ENCODE measurements at regions of chr4 and their contacts with region 1.

Region 1: GRCh38 chr4:1746265-1746691 is 25.0 kb downstream of the TACC3 start:
- DNase-seq: peak; percentile 52 to 85 (median 60)
- ATAC-seq: peak; percentile 68
- H3K4me3 ChIP-seq: no peak overlapping the region
- H3K4me3 Mint-ChIP-seq: no peak overlapping the region
- H3K27ac ChIP-seq: no peak overlapping the region
- H3K27ac Mint-ChIP-seq: no peak overlapping the region
- H3K4me1 ChIP-seq: no peaks in the 10 kb centered on the region
- H3K4me1 Mint-ChIP-seq: no peaks in the 10 kb centered on the region
- H3K27me3 ChIP-seq: no peaks in the 10 kb centered on the region
- H3K27me3 Mint-ChIP-seq: no peaks in the 10 kb centered on the region

Region 2: DNA sequence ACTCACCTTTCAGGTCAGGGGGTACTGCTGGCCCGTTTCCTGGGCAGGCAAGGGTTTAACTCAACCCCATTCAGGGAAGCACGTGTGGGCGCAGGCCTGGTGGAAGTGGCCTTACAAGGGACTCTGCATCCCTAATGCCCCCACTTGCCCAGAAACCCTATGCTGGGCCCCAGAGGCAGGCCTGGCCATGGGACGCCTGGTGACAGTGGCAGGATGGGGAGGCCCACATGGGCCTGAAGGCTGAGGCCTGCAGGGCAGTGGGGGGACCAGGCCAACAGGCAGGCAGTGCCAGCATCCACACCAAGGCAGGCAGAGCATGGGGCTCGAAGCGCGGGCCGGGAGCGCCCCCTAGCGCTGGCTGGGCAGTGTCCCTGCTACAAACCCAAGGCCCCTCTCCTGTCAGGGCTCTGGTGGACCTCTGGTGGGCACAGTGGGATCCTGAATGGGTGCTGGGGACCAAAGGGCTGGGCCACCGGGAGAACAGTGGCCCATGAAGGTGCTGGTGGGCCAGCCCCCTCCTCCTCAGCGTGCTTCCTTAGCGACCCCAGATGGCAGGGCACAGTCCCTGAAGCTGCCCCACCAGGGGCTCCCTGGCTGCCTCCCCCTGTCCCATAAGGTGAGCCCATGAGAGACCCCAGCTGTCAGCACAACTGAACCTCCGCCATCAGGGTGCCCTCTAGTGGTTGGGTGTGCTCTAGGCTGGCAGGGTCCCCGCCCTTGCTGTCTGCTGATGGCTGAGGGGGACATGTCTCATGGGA is 63.7 kb after region 1 on chr4:
- CTCF ChIA-PET with region 1: interaction called, 5 read pairs
- POLR2A ChIA-PET with region 1: no interaction called
- intact Hi-C with region 1: loop called in 1 of 2 experiments (anchors 1 kb)
- DNase-seq: peak; percentile 30 to 79 (median 61)
- ATAC-seq: peak; percentile 74
- H3K4me3 ChIP-seq: no peak overlapping the region
- H3K4me3 Mint-ChIP-seq: no peak overlapping the region
- H3K27ac ChIP-seq: no peak overlapping the region
- H3K27ac Mint-ChIP-seq: no peak overlapping the region
- H3K4me1 ChIP-seq: no peaks in the 10 kb centered on the region
- H3K4me1 Mint-ChIP-seq: peaks cover 0 to 2% (median 0%) of the 10 kb centered on the region in 7 donors
- H3K27me3 ChIP-seq: no peaks in the 10 kb centered on the region
- H3K27me3 Mint-ChIP-seq: no peaks in the 10 kb centered on the region

Region 3: GRCh38 chr4:1910643-1911042 is 164.4 kb after region 1 on chr4:
- CTCF ChIA-PET with region 1: no interaction called
- POLR2A ChIA-PET with region 1: no interaction called
- intact Hi-C with region 1: loop called in 1 of 2 experiments (anchors 1 kb)
- DNase-seq: no peak
- ATAC-seq: no peak
- H3K4me3 ChIP-seq: no peak overlapping the region
- H3K4me3 Mint-ChIP-seq: no peak overlapping the region
- H3K27ac ChIP-seq: no peak overlapping the region
- H3K27ac Mint-ChIP-seq: peak overlapping the region in 5 of 9 donors; percentile 6 to 62 (median 12)
- H3K4me1 ChIP-seq: no peaks in the 10 kb centered on the region
- H3K4me1 Mint-ChIP-seq: peaks cover 3 to 48% (median 19%) of the 10 kb centered on the region in 7 donors
- H3K27me3 ChIP-seq: no peaks in the 10 kb centered on the region
- H3K27me3 Mint-ChIP-seq: no peaks in the 10 kb centered on the region

Region 4: DNA sequence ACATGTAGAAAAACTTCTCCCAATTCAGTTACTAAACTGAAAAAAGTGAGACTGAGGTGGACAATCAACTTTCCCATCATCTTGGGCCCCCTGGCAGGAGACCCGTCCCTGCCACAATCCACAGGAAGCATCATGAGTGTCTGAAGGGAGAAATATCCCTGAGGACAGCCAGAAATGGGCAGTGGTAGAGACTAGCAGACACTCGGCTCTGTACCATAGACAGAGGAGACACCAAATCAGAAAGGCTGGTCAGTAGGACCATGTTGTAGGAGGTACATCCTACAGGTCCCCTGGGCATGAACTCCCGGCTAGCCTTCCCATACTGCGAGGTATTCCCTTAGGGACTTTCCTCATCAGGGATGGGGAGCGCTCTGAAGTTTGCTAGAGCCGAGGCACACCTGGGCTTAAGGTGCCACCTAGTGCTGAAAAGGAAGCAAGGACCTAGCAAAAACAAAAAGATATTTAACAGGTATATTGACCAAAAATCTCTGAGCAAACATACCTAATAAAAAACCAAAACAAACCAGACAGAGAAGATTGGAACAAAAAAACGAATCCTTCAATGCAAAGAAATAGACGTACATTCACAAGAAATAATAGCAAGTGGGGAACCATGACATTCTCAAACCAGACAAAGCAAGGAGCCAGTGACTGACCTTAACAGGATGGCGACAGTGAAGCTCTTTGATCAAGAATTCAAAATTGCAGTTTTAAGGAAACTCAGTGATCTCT is 440.0 kb after region 1 on chr4:
- CTCF ChIA-PET with region 1: no interaction called
- POLR2A ChIA-PET with region 1: no interaction called
- intact Hi-C with region 1: loop called in 1 of 2 experiments (anchors 2 kb)
- DNase-seq: peak in 1 of 9 donors; percentile 2
- ATAC-seq: no peak
- H3K4me3 ChIP-seq: no peak overlapping the region
- H3K4me3 Mint-ChIP-seq: no peak overlapping the region
- H3K27ac ChIP-seq: no peak overlapping the region
- H3K27ac Mint-ChIP-seq: no peak overlapping the region
- H3K4me1 ChIP-seq: no peaks in the 10 kb centered on the region
- H3K4me1 Mint-ChIP-seq: peaks cover 0 to 24% (median 0%) of the 10 kb centered on the region in 7 donors
- H3K27me3 ChIP-seq: no peaks in the 10 kb centered on the region
- H3K27me3 Mint-ChIP-seq: peaks cover 0 to 2% (median 0%) of the 10 kb centered on the region in 5 donors

Measured in naive thymus-derived CD4-positive, alpha-beta T cell (primary cell).